CD8-positive, alpha-beta T cell (primary cell): ENCODE measurements at regions of chr3 and their contacts with region 1.

Region 1: GRCh38 chr3:100068826-100069225 is 45.5 kb downstream of the FILIP1L start:
- DNase-seq: peak; percentile 48 to 81 (median 74)
- ATAC-seq: peak; percentile 99
- H3K4me3 ChIP-seq: no peak overlapping the region
- H3K4me3 Mint-ChIP-seq: no peak overlapping the region
- H3K27ac ChIP-seq: no peak overlapping the region
- H3K27ac Mint-ChIP-seq: no peak overlapping the region
- H3K4me1 ChIP-seq: peaks cover 16% of the 10 kb centered on the region
- H3K4me1 Mint-ChIP-seq: peaks cover 25% of the 10 kb centered on the region
- H3K27me3 ChIP-seq: no peaks in the 10 kb centered on the region
- H3K27me3 Mint-ChIP-seq: no peaks in the 10 kb centered on the region
- CTCF ChIP-seq: peak; percentile 68

Region 2: GRCh38 chr3:99833617-99834205 is 235.1 kb before region 1 on chr3:
- CTCF ChIA-PET with region 1: interaction called, 4 read pairs
- POLR2A ChIA-PET with region 1: no interaction called
- intact Hi-C with region 1: loop called (anchors 5 to 10 kb)
- DNase-seq: no peak
- ATAC-seq: no peak
- H3K4me3 ChIP-seq: no peak overlapping the region
- H3K4me3 Mint-ChIP-seq: no peak overlapping the region
- H3K27ac ChIP-seq: no peak overlapping the region
- H3K27ac Mint-ChIP-seq: no peak overlapping the region
- H3K4me1 ChIP-seq: no peaks in the 10 kb centered on the region
- H3K4me1 Mint-ChIP-seq: peaks cover 2% of the 10 kb centered on the region
- H3K27me3 ChIP-seq: no peaks in the 10 kb centered on the region
- H3K27me3 Mint-ChIP-seq: no peaks in the 10 kb centered on the region
- CTCF ChIP-seq: no peak

Region 3: DNA sequence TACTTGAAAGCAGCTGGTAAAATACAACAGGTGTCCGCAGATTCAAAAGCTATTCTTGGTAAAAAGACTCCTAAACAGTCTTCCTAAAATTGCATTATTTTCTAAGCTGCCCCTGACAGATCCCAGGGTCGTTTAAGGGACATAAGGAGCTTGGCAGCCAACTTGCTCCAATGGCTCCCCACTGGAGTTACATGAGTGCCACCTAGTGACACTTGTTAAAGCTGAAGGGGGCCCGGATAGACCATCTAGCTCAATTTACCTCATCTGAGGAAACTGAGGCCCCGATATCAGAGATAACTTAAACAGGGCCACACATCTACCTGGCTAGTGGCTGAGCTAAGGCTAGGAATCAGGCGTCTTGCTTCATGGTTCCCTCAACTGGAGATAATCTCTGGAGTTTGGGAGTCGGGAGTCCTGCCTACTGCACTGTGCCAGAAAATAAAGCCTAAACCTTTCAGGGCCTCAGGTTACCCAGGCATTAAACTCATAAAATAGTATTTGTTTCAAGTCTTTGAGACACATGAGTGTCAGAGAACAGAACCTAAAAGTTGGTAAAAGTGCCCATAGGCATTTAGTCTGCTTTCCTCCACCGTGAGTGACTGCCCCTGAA is 185.4 kb after region 1 on chr3:
- CTCF ChIA-PET with region 1: interaction called, 22 read pairs
- POLR2A ChIA-PET with region 1: interaction called, 7 read pairs
- intact Hi-C with region 1: loop called (anchors 1 kb)
- DNase-seq: peak in 4 of 9 experiments; percentile 15 to 64 (median 36)
- ATAC-seq: peak; percentile 66
- H3K4me3 ChIP-seq: no peak overlapping the region
- H3K4me3 Mint-ChIP-seq: no peak overlapping the region
- H3K27ac ChIP-seq: no peak overlapping the region
- H3K27ac Mint-ChIP-seq: no peak overlapping the region
- H3K4me1 ChIP-seq: no peaks in the 10 kb centered on the region
- H3K4me1 Mint-ChIP-seq: peaks cover 5% of the 10 kb centered on the region
- H3K27me3 ChIP-seq: no peaks in the 10 kb centered on the region
- H3K27me3 Mint-ChIP-seq: no peaks in the 10 kb centered on the region
- CTCF ChIP-seq: peak; percentile 51

Region 4: GRCh38 chr3:100260685-100261484 is 192.1 kb after region 1 on chr3 and contains the start of gene TBC1D23:
- CTCF ChIA-PET with region 1: interaction called, 16 read pairs
- POLR2A ChIA-PET with region 1: interaction called, 3 read pairs
- intact Hi-C with region 1: no loop called
- DNase-seq: peak; percentile 91 to 99 (median 97)
- ATAC-seq: peak; percentile 98
- H3K4me3 ChIP-seq: peak within 1 kb of the TSS; percentile 80 to 90
- H3K4me3 Mint-ChIP-seq: peak within 1 kb of the TSS; percentile 95
- H3K27ac ChIP-seq: peak within 1 kb of the TSS; percentile 91 to 94
- H3K27ac Mint-ChIP-seq: peak within 1 kb of the TSS; percentile 98
- H3K4me1 ChIP-seq: peaks cover 17% of the 10 kb centered on the region
- H3K4me1 Mint-ChIP-seq: peaks cover 60% of the 10 kb centered on the region
- H3K27me3 ChIP-seq: no peaks in the 10 kb centered on the region
- H3K27me3 Mint-ChIP-seq: no peaks in the 10 kb centered on the region
- CTCF ChIP-seq: no peak
- total RNA-seq, gene TBC1D23: 38.9 to 43.9 TPM

Region 5: DNA sequence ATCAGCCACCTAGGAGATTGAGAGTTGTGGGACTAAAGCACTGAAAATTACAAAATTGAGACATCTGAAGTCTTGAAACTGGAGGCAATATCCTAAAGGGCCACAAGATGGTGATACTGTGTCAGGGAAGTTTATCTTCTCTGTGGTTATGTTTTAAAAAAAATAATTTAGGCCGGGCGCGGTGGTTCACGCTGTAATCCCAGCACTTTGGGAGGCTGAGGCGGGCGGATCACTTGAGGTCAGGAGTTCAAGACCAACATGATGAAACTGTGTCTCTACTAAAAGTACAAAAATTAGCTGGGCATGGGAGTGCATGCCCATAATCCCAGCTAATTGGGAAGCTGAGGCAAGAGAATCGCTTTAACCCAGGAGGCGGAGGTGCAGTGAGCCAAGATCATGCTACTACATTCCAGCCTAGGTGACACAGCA is 247.8 kb after region 1 on chr3:
- CTCF ChIA-PET with region 1: no interaction called
- POLR2A ChIA-PET with region 1: no interaction called
- intact Hi-C with region 1: loop called in 1 of 2 experiments (anchors 5 kb)
- DNase-seq: peak in 6 of 9 experiments; percentile 13 to 76 (median 30)
- ATAC-seq: peak; percentile 84
- H3K4me3 ChIP-seq: no peak overlapping the region
- H3K4me3 Mint-ChIP-seq: peak overlapping the region; percentile 45
- H3K27ac ChIP-seq: no peak overlapping the region
- H3K27ac Mint-ChIP-seq: no peak overlapping the region
- H3K4me1 ChIP-seq: no peaks in the 10 kb centered on the region
- H3K4me1 Mint-ChIP-seq: peaks cover 6% of the 10 kb centered on the region
- H3K27me3 ChIP-seq: no peaks in the 10 kb centered on the region
- H3K27me3 Mint-ChIP-seq: no peaks in the 10 kb centered on the region
- CTCF ChIP-seq: peak; percentile 58

Region 6: GRCh38 chr3:100370756-100371155 is 301.9 kb after region 1 on chr3:
- CTCF ChIA-PET with region 1: no interaction called
- POLR2A ChIA-PET with region 1: no interaction called
- intact Hi-C with region 1: no loop called
- DNase-seq: no peak
- ATAC-seq: no peak
- H3K4me3 ChIP-seq: no peak overlapping the region
- H3K4me3 Mint-ChIP-seq: no peak overlapping the region
- H3K27ac ChIP-seq: no peak overlapping the region
- H3K27ac Mint-ChIP-seq: peak overlapping the region; percentile 29
- H3K4me1 ChIP-seq: no peaks in the 10 kb centered on the region
- H3K4me1 Mint-ChIP-seq: no peaks in the 10 kb centered on the region
- H3K27me3 ChIP-seq: no peaks in the 10 kb centered on the region
- H3K27me3 Mint-ChIP-seq: no peaks in the 10 kb centered on the region
- CTCF ChIP-seq: no peak

Region 7: GRCh38 chr3:100590114-100590839 is 521.5 kb after region 1 on chr3:
- CTCF ChIA-PET with region 1: interaction called, 8 read pairs
- POLR2A ChIA-PET with region 1: no interaction called
- intact Hi-C with region 1: loop called in 1 of 2 experiments (anchors 2 kb)
- DNase-seq: peak in 8 of 9 experiments; percentile 29 to 81 (median 60)
- ATAC-seq: peak; percentile 89
- H3K4me3 ChIP-seq: peak overlapping the region in 1 of 2 experiments; percentile 9
- H3K4me3 Mint-ChIP-seq: peak overlapping the region; percentile 7
- H3K27ac ChIP-seq: no peak overlapping the region
- H3K27ac Mint-ChIP-seq: no peak overlapping the region
- H3K4me1 ChIP-seq: peaks cover 3% of the 10 kb centered on the region
- H3K4me1 Mint-ChIP-seq: peaks cover 3% of the 10 kb centered on the region
- H3K27me3 ChIP-seq: no peaks in the 10 kb centered on the region
- H3K27me3 Mint-ChIP-seq: no peaks in the 10 kb centered on the region
- CTCF ChIP-seq: peak; percentile 81